Endothelial cell of umbilical vein (primary cell): ENCODE measurements at regions of chr9 and their contacts with region 1.

Region 1: GRCh38 chr9:109986521-109986991 is 206.6 kb downstream of the PALM2AKAP2 start:
- DNase-seq: peak; percentile 95
- H3K4me3 ChIP-seq: peak overlapping the region in 1 of 3 experiments; percentile 10
- H3K27ac ChIP-seq: peak overlapping the region; percentile 93
- H3K4me1 ChIP-seq: peaks cover 22% of the 10 kb centered on the region
- H3K27me3 ChIP-seq: no peaks in the 10 kb centered on the region
- CTCF ChIP-seq: no peak
- POLR2A ChIP-seq: no peak

Region 2: GRCh38 chr9:110015759-110016158 is 29.2 kb after region 1 on chr9:
- CTCF ChIA-PET with region 1: no interaction called
- POLR2A ChIA-PET with region 1: no interaction called
- dilution Hi-C with region 1: no loop called
- intact Hi-C with region 1: loop called (anchors 1 kb)
- DNase-seq: peak; percentile 95
- H3K4me3 ChIP-seq: no peak overlapping the region
- H3K27ac ChIP-seq: peak overlapping the region; percentile 100
- H3K4me1 ChIP-seq: peaks cover 28% of the 10 kb centered on the region
- H3K27me3 ChIP-seq: no peaks in the 10 kb centered on the region
- CTCF ChIP-seq: no peak
- POLR2A ChIP-seq: no peak

Region 3: DNA sequence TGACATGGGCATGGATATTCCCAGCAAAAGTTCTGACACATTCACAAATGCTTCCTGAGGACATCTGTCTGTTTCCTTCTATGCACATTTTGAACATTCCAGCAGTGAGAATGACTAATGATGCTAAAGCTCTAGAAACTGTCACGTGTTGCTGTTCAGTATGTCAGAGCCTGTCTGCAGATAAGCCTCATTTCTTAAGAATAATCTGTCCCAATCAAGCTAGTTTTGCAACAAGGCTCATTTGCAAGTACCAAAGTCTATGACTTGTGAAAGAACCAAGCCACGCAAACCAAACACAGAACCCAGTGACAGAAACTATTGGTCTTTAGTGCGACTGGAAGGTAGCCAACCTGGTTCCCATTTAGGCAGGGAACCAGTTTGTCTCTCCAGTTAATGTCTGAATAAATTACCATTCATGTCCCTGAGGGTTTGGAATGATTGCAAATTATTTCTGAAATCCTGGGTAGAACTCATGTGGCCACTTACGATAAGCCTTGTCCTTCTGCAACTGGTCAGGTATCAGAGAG is 42.9 kb after region 1 on chr9:
- CTCF ChIA-PET with region 1: interaction called, 10 read pairs
- POLR2A ChIA-PET with region 1: interaction called, 7 read pairs
- dilution Hi-C with region 1: no loop called
- intact Hi-C with region 1: loop called (anchors 1 kb)
- DNase-seq: peak; percentile 91
- H3K4me3 ChIP-seq: peak overlapping the region in 1 of 3 experiments; percentile 1
- H3K27ac ChIP-seq: peak overlapping the region; percentile 97
- H3K4me1 ChIP-seq: peaks cover 57% of the 10 kb centered on the region
- H3K27me3 ChIP-seq: no peaks in the 10 kb centered on the region
- CTCF ChIP-seq: no peak
- POLR2A ChIP-seq: peak; percentile 63

Region 4: GRCh38 chr9:110048403-110048975 is 61.9 kb after region 1 on chr9:
- CTCF ChIA-PET with region 1: interaction called, 4 read pairs
- POLR2A ChIA-PET with region 1: interaction called, 5 read pairs
- dilution Hi-C with region 1: no loop called
- intact Hi-C with region 1: loop called (anchors 1 kb)
- DNase-seq: peak; percentile 88
- H3K4me3 ChIP-seq: peak overlapping the region; percentile 99 to 100 (median 100)
- H3K27ac ChIP-seq: peak overlapping the region; percentile 98
- H3K4me1 ChIP-seq: peaks cover 28% of the 10 kb centered on the region
- H3K27me3 ChIP-seq: no peaks in the 10 kb centered on the region
- CTCF ChIP-seq: no peak
- POLR2A ChIP-seq: peak; percentile 96

Region 5: DNA sequence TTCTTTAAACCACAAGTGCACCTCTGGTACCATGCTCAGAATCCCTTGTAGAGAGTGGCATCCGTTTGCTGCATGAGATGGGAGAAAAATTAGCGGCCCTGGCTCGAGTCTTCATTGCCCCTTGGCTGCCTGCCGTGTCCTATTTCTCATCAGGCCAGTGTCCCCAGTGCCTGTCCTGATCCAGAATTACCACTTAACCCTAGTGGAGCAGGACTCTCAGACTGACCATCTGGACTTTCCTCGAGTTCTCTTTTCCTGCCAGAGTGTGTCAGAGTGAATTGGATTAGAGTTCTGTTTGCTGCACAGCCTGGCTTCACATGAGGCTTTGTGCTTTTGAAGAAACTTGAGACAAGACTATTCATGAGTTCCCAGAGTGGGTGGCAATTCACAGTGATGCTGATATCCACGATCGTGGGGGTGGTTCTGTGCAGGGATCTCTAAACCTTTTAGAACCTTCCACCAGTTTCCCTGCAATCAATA is 128.8 kb after region 1 on chr9:
- CTCF ChIA-PET with region 1: interaction called, 4 read pairs
- POLR2A ChIA-PET with region 1: no interaction called
- dilution Hi-C with region 1: no loop called
- intact Hi-C with region 1: loop called (anchors 1 kb)
- DNase-seq: peak; percentile 59
- H3K4me3 ChIP-seq: no peak overlapping the region
- H3K27ac ChIP-seq: peak overlapping the region; percentile 36
- H3K4me1 ChIP-seq: peaks cover 28% of the 10 kb centered on the region
- H3K27me3 ChIP-seq: no peaks in the 10 kb centered on the region
- CTCF ChIP-seq: no peak
- POLR2A ChIP-seq: no peak

Region 6: GRCh38 chr9:110125207-110125751 is 138.7 kb after region 1 on chr9:
- CTCF ChIA-PET with region 1: no interaction called
- POLR2A ChIA-PET with region 1: no interaction called
- dilution Hi-C with region 1: no loop called
- intact Hi-C with region 1: loop called (anchors 5 kb)
- DNase-seq: peak; percentile 81
- H3K4me3 ChIP-seq: no peak overlapping the region
- H3K27ac ChIP-seq: peak overlapping the region; percentile 79
- H3K4me1 ChIP-seq: peaks cover 60% of the 10 kb centered on the region
- H3K27me3 ChIP-seq: no peaks in the 10 kb centered on the region
- CTCF ChIP-seq: no peak
- POLR2A ChIP-seq: no peak